HCT116 (cell line): ENCODE measurements at regions of chr5 and their contacts with region 1.

Region 1: DNA sequence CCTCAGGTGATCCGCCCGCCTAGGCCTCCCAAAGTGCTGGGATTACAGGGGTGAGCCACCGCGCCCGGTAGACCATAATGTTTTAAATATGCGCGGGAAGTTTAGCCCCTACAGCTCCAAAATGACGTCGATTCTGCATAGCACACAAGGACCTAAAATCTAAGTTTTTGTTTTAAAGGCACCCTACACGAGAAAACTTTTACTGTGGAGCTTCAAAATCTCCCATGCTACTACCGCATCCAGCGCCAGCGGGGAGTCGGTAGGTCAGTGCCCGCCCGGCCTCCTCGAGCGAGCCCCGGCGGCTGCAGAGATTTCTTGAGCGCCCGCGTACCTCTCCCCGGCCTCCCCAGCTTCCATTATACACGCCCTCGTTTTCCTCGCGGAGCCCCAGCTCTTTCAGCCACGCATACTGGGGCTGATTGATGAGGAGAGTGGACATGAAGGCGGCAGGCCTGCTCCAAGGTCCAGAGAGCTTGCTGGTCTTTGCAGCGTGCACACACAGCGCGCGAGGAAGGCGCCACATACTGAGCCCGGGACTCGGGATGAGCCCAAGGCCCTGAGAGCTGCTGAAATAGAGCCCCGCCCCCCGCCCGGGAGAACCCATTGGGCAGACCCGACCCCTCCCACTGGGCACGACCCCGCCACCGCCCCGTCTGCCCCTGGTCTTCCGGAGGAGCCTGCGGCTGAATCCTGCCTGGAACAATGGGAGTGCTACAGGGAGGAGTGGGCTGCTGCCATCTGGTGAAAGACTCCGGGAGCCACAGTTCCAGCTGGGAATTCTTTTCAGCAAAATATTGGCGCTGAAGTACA is at the start of gene ALDH7A1:
- DNase-seq: peak; percentile 83
- ATAC-seq: peak; percentile 94
- H3K4me3 ChIP-seq: peak within 1 kb of the TSS; percentile 73 to 86
- H3K27ac ChIP-seq: peak within 1 kb of the TSS; percentile 67
- H3K4me1 ChIP-seq: peaks cover 0 to 18% of the 10 kb centered on the region in 2 experiments; a peak in 3 of 4 replicates
- H3K27me3 ChIP-seq: no peaks in the 10 kb centered on the region
- CTCF ChIP-seq: peak; percentile 42 to 82 (median 51)
- POLR2A ChIP-seq: peak; percentile 91
- RAD21 ChIP-seq: peak; percentile 74
- total RNA-seq, gene ALDH7A1: 93.2 TPM

Region 2: GRCh38 chr5:126007841-126008240 is 587.0 kb before region 1 on chr5:
- CTCF ChIA-PET with region 1: no interaction called
- POLR2A ChIA-PET with region 1: no interaction called
- RAD21 ChIA-PET with region 1: no interaction called
- intact Hi-C with region 1: no loop called
- DNase-seq: no peak
- ATAC-seq: no peak
- H3K4me3 ChIP-seq: no peak overlapping the region
- H3K27ac ChIP-seq: no peak overlapping the region
- H3K4me1 ChIP-seq: no peaks in the 10 kb centered on the region; a peak in 1 of 4 replicates
- H3K27me3 ChIP-seq: no peaks in the 10 kb centered on the region
- CTCF ChIP-seq: no peak
- POLR2A ChIP-seq: no peak
- RAD21 ChIP-seq: no peak

Region 3: DNA sequence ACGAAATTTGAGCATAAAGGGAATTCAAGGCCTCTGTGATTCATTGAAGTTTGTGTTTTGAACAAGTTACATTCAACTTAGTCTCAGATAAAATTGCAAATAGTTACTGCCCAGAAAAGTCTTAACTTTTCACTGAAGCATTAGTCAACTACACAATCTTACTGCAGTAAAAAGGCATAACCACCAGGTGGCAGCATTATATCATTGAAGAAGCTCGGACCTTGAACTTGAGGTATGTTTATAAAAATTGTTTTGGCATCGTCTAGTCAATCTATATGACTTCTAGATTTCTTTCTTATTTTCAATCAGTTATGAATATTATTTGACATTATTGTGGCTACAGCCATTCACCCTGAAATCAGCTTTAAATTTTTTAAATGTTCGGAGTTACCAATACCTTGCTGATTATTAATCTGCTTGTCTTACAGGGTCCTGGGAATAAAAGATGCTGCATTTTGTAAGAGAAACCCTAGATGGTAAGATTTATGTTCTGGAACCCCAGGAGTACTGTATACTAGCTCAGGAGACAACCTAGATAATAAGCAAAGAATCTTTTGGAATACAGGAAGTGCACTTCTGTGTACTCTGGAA is 255.6 kb before region 1 on chr5:
- CTCF ChIA-PET with region 1: interaction called, 7 read pairs
- POLR2A ChIA-PET with region 1: interaction called, 3 read pairs
- RAD21 ChIA-PET with region 1: no interaction called
- intact Hi-C with region 1: loop called (anchors 2 kb)
- DNase-seq: peak; percentile 54
- ATAC-seq: peak; percentile 74
- H3K4me3 ChIP-seq: no peak overlapping the region
- H3K27ac ChIP-seq: no peak overlapping the region
- H3K4me1 ChIP-seq: peaks cover 0 to 4% of the 10 kb centered on the region in 2 experiments; a peak in 1 of 4 replicates
- H3K27me3 ChIP-seq: no peaks in the 10 kb centered on the region
- CTCF ChIP-seq: peak; percentile 65 to 89 (median 84)
- POLR2A ChIP-seq: no peak
- RAD21 ChIP-seq: peak; percentile 90